H1 (cell line): ENCODE measurements at regions of chr19 and their contacts with region 1.

Region 1: GRCh38 chr19:39514840-39515550 is at the start of gene SELENOV:
- DNase-seq: peak in 1 of 2 experiments; percentile 91
- H3K4me3 ChIP-seq: peak within 1 kb of the TSS; percentile 76 to 95 (median 90)
- H3K27ac ChIP-seq: peak within 1 kb of the TSS; percentile 61; the same call in 1 of the 2 replicates
- H3K4me1 ChIP-seq: peaks cover 0 to 10% (median 5%) of the 10 kb centered on the region in 4 experiments; a peak in 6 of 7 replicates
- H3K27me3 ChIP-seq: peaks cover 0 to 2% (median 0%) of the 10 kb centered on the region in 4 experiments; a peak in 3 of 7 replicates
- CTCF ChIP-seq: peak; percentile 24 to 41 (median 34)
- EP300 ChIP-seq: peak in 1 of 2 experiments; percentile 66; a peak in 1 of 3 replicates
- POLR2A ChIP-seq: peak in 1 of 2 experiments; percentile 60; a peak in 2 of 3 replicates
- RAD21 ChIP-seq: peak; percentile 26 to 43; a peak in 3 of 4 replicates
- total RNA-seq, gene SELENOV: 8.4 and 11.0 TPM in 2 replicates

Region 2: GRCh38 chr19:39494661-39495060 is 20.3 kb before region 1 on chr19:
- CTCF ChIA-PET with region 1: interaction called, 12 read pairs
- POLR2A ChIA-PET with region 1: interaction called, 14 read pairs
- DNase-seq: no peak
- H3K4me3 ChIP-seq: no peak overlapping the region
- H3K27ac ChIP-seq: no peak overlapping the region
- H3K4me1 ChIP-seq: peaks cover 4 to 8% (median 5%) of the 10 kb centered on the region in 4 experiments; a peak in 5 of 7 replicates
- H3K27me3 ChIP-seq: peaks cover 7 to 21% (median 17%) of the 10 kb centered on the region in 4 experiments
- CTCF ChIP-seq: no peak
- EP300 ChIP-seq: no peak
- POLR2A ChIP-seq: no peak
- RAD21 ChIP-seq: no peak

Region 3: DNA sequence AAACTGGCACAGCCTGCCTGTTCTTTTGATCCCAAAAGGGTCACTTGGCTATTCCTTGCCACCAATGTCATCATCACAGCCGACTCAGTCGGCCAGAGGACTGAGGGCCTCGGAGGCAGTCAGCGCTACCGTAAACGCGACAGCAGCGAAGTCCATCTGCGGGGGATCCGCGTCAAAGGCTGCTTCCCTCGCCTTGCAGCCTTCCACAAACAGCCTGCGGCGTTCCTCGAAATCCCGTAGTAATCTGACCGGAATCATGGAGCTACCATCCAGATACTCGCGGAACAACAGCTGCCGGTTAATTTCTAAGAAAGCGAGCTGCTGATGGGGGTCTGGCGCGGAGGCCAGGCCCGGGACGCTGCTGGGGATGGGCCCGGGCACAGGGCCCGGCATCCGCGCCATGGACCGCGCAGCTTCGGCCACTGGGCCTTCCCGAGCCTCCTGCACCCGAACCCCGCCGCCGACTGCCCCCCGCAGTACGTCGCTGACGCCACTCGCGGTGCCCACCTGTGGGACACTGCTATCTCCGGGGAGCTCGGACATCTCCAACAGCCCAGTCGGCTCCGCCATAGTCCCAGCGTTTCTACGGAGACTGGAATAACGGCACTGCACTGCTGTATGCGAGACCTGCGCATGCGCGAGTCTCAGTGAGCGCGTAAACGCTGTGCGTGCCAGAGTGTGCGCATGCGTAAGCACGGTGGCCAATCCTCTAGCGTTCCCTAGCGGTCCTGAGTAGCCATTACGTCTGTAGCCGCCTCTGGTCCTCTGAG is 17.4 kb after region 1 on chr19 and contains the start of gene EID2B:
- CTCF ChIA-PET with region 1: interaction called, 101 read pairs
- POLR2A ChIA-PET with region 1: interaction called, 17 read pairs
- DNase-seq: peak; percentile 94 to 96
- H3K4me3 ChIP-seq: peak within 1 kb of the TSS; percentile 55 to 93 (median 78)
- H3K27ac ChIP-seq: no peak within 1 kb of the TSS
- H3K4me1 ChIP-seq: no peaks in the 10 kb centered on the region
- H3K27me3 ChIP-seq: peaks cover 0 to 3% (median 0%) of the 10 kb centered on the region in 4 experiments; a peak in 1 of 7 replicates
- CTCF ChIP-seq: peak; percentile 94 to 99 (median 99)
- EP300 ChIP-seq: no peak
- POLR2A ChIP-seq: peak in 1 of 2 experiments; percentile 51; a peak in 1 of 3 replicates
- RAD21 ChIP-seq: peak; percentile 97 to 99
- total RNA-seq, gene EID2B: 2.4 and 3.4 TPM in 2 replicates

Region 4: GRCh38 chr19:39539519-39540332 is 24.7 kb after region 1 on chr19 and contains the start of gene EID2:
- CTCF ChIA-PET with region 1: interaction called, 101 read pairs
- POLR2A ChIA-PET with region 1: interaction called, 13 read pairs
- DNase-seq: peak in 1 of 2 experiments; percentile 96
- H3K4me3 ChIP-seq: peak within 1 kb of the TSS; percentile 70 to 94 (median 92)
- H3K27ac ChIP-seq: peak within 1 kb of the TSS; percentile 84
- H3K4me1 ChIP-seq: peaks cover 0 to 4% (median under 1%) of the 10 kb centered on the region in 4 experiments; a peak in 3 of 7 replicates
- H3K27me3 ChIP-seq: no peaks in the 10 kb centered on the region
- CTCF ChIP-seq: peak; percentile 66 to 85 (median 74)
- EP300 ChIP-seq: no peak
- POLR2A ChIP-seq: peak in 1 of 2 experiments; percentile 83; a peak in 2 of 3 replicates
- RAD21 ChIP-seq: peak; percentile 46 to 54
- total RNA-seq, gene EID2: 29.6 and 29.9 TPM in 2 replicates